Activated CD8-positive, alpha-beta T cell treated with anti-CD3 and anti-CD28 coated beads for 36 hours (primary cell): ENCODE measurements at regions of chr17 and their contacts with region 1.

Region 1: GRCh38 chr17:57243171-57243948 is 13.0 kb upstream of the MSI2 start:
- DNase-seq: peak; percentile 82
- ATAC-seq: peak; percentile 94
- H3K4me3 Mint-ChIP-seq: no peak overlapping the region
- H3K27ac Mint-ChIP-seq: peak overlapping the region; percentile 40
- H3K4me1 Mint-ChIP-seq: peaks cover 3% of the 10 kb centered on the region
- H3K27me3 Mint-ChIP-seq: peaks cover 2% of the 10 kb centered on the region
- CTCF ChIP-seq: peak; percentile 100

Region 2: GRCh38 chr17:57226793-57227192 is 16.6 kb before region 1 on chr17:
- CTCF ChIA-PET with region 1: interaction called, 31 read pairs
- POLR2A ChIA-PET with region 1: no interaction called
- intact Hi-C with region 1: no loop called
- DNase-seq: no peak
- ATAC-seq: no peak
- H3K4me3 Mint-ChIP-seq: no peak overlapping the region
- H3K27ac Mint-ChIP-seq: no peak overlapping the region
- H3K4me1 Mint-ChIP-seq: no peaks in the 10 kb centered on the region
- H3K27me3 Mint-ChIP-seq: peaks cover 12% of the 10 kb centered on the region
- CTCF ChIP-seq: no peak

Region 3: GRCh38 chr17:57299176-57299575 is 55.8 kb after region 1 on chr17:
- CTCF ChIA-PET with region 1: interaction called, 10 read pairs
- POLR2A ChIA-PET with region 1: no interaction called
- intact Hi-C with region 1: no loop called
- DNase-seq: no peak
- ATAC-seq: no peak
- H3K4me3 Mint-ChIP-seq: no peak overlapping the region
- H3K27ac Mint-ChIP-seq: no peak overlapping the region
- H3K4me1 Mint-ChIP-seq: peaks cover 51% of the 10 kb centered on the region
- H3K27me3 Mint-ChIP-seq: no peaks in the 10 kb centered on the region
- CTCF ChIP-seq: no peak

Region 4: DNA sequence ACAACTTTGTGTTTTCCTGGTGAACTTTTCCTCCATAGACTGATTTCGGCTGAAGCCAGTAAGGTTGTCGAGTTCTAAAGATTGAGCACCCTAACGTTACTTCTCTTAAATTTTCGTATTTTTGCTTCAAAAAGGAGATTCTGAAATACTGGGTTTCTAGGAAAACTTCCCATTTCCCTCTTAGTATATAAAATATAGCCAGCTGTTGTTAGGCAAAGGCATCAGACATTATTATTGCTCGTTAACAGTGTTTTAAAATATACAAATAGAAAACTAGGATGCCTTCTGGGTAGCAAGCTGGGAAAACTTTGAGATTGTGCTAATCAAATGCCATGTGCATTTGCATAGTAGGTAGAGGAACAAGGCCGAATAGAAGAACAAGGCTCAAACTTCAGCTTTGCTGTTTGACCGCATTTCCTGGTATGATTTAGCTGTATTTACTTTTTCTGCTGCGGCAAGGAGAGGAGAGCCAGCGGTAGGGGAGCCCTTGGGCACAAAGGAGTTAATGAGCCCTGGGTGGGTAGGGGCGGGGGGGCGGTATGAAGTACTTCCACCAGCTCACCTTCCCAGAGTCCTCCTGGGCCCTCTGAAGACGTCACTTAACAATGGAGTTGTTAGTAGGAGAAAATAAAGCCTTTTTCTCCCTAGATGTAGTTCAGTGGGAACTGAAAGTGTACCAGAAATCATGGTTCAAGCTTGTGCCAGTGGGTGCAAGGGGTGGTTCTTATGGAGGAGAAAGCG is 164.9 kb after region 1 on chr17:
- CTCF ChIA-PET with region 1: interaction called, 32 read pairs
- POLR2A ChIA-PET with region 1: interaction called, 4 read pairs
- intact Hi-C with region 1: no loop called
- DNase-seq: peak; percentile 73
- ATAC-seq: peak; percentile 82
- H3K4me3 Mint-ChIP-seq: peak overlapping the region; percentile 34
- H3K27ac Mint-ChIP-seq: peak overlapping the region; percentile 43
- H3K4me1 Mint-ChIP-seq: peaks cover 49% of the 10 kb centered on the region
- H3K27me3 Mint-ChIP-seq: no peaks in the 10 kb centered on the region
- CTCF ChIP-seq: no peak

Region 5: DNA sequence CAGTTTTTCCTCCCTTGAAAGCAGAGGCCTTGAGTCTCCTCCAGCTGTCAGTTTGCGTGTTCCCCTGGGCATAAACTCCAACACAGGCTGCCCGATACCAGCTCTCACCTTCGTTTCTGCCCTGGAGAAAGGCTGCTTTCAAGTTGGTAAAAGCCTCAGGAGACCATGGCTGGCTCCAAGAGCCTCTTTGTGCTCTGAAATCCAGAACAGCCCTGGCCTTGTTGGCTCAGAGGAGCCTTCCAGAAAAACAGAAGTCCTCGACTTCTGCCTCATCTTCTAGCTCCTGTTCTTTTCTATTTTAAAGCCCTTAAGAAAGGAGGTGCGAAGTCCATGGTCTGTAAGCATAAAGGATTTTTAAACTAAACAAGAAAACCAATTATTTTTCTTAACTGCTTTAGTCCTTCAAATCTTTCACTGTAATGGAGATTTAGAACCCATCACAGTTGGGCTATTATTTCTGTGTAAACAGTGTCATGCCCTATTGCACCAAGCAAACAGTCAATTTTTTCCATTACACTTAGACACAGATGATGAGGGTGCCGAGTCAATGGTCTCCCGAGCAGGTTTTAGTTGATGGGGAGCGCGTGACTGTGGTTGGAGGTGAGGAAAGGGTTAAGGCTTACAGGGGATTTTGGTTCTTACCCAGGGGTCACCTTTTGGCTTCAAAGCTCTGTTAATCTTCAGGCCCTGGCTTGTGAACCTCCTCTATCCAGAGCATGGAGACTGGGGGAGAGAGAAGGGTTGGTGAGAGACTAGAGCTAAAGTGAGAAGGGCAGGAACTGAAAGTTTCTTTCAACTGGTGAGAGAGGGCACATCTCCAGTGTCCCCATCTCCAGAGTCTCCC is 225.8 kb after region 1 on chr17:
- CTCF ChIA-PET with region 1: interaction called, 12 read pairs
- POLR2A ChIA-PET with region 1: no interaction called
- intact Hi-C with region 1: no loop called
- DNase-seq: peak; percentile 46
- ATAC-seq: peak; percentile 82
- H3K4me3 Mint-ChIP-seq: no peak overlapping the region
- H3K27ac Mint-ChIP-seq: peak overlapping the region; percentile 55
- H3K4me1 Mint-ChIP-seq: peaks cover 35% of the 10 kb centered on the region
- H3K27me3 Mint-ChIP-seq: no peaks in the 10 kb centered on the region
- CTCF ChIP-seq: no peak

Region 6: GRCh38 chr17:57597531-57598453 is 354.4 kb after region 1 on chr17:
- CTCF ChIA-PET with region 1: interaction called, 37 read pairs
- POLR2A ChIA-PET with region 1: no interaction called
- intact Hi-C with region 1: no loop called
- DNase-seq: peak; percentile 55
- ATAC-seq: no peak
- H3K4me3 Mint-ChIP-seq: no peak overlapping the region
- H3K27ac Mint-ChIP-seq: peak overlapping the region; percentile 95
- H3K4me1 Mint-ChIP-seq: peaks cover 60% of the 10 kb centered on the region
- H3K27me3 Mint-ChIP-seq: no peaks in the 10 kb centered on the region
- CTCF ChIP-seq: peak; percentile 81

Region 7: DNA sequence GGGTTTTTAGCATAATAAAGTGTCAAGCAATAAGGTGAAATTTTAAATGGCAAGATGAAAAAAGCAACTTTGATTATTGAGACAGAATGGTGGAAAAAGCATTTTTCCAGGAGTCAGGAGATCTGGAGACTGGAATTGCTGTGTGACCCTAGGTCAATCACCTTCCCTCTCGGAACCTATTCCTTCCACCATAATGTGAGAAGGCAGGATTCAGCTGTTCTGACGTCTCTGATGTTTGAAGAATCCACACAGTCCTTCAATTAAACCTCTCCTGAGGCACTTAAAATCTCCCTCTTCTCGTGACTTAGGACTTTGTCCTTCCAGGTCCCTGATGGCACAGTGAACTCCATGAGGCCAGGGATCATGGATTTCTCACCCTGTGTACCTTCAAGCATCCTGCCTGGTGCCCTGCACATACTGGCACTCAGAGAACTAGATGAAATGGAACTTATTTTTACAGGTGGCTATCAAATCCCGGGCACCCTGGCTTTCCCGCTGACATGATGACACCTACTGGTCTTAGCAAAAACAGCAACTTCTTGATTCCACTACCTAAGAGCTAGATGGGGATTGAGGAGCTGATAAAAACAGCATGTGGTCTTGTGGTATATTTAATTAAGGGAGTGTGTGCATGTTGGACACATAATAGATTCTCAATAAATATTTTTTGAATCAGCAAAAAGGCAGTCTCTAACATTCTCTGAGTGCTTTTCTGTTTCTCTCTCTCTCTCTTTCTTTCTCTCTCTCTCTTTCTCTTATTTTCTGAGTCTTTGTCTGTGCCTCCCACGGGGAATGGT is 504.1 kb after region 1 on chr17:
- CTCF ChIA-PET with region 1: interaction called, 35 read pairs
- POLR2A ChIA-PET with region 1: no interaction called
- intact Hi-C with region 1: loop called (anchors 5 kb)
- DNase-seq: peak; percentile 64
- ATAC-seq: peak; percentile 89
- H3K4me3 Mint-ChIP-seq: no peak overlapping the region
- H3K27ac Mint-ChIP-seq: no peak overlapping the region
- H3K4me1 Mint-ChIP-seq: peaks cover 8% of the 10 kb centered on the region
- H3K27me3 Mint-ChIP-seq: no peaks in the 10 kb centered on the region
- CTCF ChIP-seq: peak; percentile 88